ENCODE measurements at regions of chr3 and their contacts with region 1.

Region 1: DNA sequence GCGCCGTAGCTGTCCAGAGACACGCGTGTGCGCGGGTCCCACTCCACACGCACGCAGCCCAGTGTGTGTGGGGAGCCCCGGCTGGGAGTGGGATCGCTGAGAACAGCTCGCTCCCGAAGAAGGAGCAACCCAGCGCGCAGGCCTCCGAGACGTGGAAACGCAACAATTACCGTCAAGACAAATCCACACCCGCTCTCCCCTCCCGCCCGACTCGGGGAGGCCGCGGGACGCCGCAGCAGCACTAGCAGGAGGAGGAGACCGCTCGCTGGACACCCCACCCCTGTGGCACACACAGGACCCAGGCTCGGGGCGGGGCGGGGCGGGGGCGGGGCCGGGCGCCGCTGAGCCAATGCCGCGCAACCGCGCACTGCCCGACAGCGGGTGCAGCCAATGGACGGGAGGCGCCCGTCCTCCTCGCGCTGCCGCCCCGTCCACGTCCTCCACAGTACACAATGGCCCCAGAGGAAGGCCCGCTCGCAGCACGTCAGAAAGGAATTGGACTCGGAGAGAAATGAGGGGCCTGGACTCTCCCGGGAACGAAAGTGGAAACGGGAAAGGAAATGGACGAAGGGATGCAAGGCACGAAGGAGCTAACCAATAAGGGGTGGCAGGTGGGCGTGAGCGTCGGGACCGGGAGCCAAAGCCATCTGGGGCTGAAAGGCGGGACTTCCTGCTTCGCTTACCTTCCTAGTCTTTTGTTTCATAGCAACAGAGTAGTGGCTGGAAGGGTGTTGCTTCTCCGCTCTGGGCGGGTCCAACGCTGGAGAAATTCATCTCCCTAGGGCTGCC is at the start of gene CBLB:
- DNase-seq: peak; percentile 80
- H3K4me3 Mint-ChIP-seq: peak within 1 kb of the TSS; percentile 100
- H3K27ac Mint-ChIP-seq: peak within 1 kb of the TSS; percentile 99
- H3K4me1 Mint-ChIP-seq: peaks cover 48% of the 10 kb centered on the region
- H3K27me3 Mint-ChIP-seq: no peaks in the 10 kb centered on the region
- total RNA-seq, gene CBLB: 213 and 235 TPM in 2 replicates

Region 2: DNA sequence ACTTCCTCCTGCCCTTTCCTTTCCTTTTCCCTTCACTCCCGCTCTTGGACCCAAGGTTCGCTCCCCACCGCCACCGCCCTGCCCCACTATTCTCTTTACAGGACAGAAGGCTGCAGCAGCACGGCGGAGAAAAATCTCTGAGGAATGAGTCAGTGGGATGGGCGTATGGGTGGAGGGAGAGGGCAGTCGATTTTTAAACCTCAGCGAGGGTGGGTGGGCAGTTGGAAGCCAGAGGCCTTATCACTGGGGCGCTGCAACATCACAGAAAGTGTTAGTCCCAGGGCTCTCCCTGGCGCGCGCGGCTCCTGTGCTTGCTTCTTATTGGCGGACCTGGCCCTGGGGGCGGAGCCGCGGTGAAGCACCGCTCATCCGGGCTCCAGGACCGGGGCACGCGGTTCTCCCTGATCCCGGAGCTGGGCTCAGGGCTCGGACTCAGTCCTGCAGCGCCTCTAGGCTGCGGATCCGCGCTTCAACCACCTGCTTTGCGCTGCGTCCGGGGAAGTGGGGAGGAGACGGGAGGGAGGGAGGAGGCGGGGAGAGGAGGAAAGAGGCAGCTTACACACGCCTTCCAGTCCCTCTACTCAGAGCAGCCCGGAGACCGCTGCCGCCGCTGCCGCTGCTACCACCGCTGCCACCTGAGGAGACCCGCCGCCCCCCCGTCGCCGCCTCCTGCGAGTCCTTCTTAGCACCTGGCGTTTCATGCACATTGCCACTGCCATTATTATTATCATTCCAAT is 502.4 kb before region 1 on chr3 and contains the start of gene ALCAM:
- intact Hi-C with region 1: loop called (anchors 1 kb)
- DNase-seq: peak; percentile 80
- H3K4me3 Mint-ChIP-seq: peak within 1 kb of the TSS; percentile 90
- H3K27ac Mint-ChIP-seq: peak within 1 kb of the TSS; percentile 98
- H3K4me1 Mint-ChIP-seq: peaks cover 43% of the 10 kb centered on the region
- H3K27me3 Mint-ChIP-seq: peaks cover 22% of the 10 kb centered on the region
- total RNA-seq, gene ALCAM: 24.9 and 25.2 TPM in 2 replicates

Region 3: GRCh38 chr3:105538483-105538882 is 330.5 kb before region 1 on chr3:
- intact Hi-C with region 1: no loop called
- DNase-seq: no peak
- H3K4me3 Mint-ChIP-seq: no peak overlapping the region
- H3K27ac Mint-ChIP-seq: no peak overlapping the region
- H3K4me1 Mint-ChIP-seq: no peaks in the 10 kb centered on the region
- H3K27me3 Mint-ChIP-seq: no peaks in the 10 kb centered on the region

Region 4: GRCh38 chr3:105806361-105806760 is 62.6 kb before region 1 on chr3:
- intact Hi-C with region 1: loop called (anchors 2 kb)
- DNase-seq: no peak
- H3K4me3 Mint-ChIP-seq: peak overlapping the region; percentile 40
- H3K27ac Mint-ChIP-seq: peak overlapping the region; percentile 84
- H3K4me1 Mint-ChIP-seq: peaks cover 67% of the 10 kb centered on the region
- H3K27me3 Mint-ChIP-seq: no peaks in the 10 kb centered on the region

Region 5: GRCh38 chr3:105984837-105985236 is 115.9 kb after region 1 on chr3:
- intact Hi-C with region 1: loop called (anchors 5 kb)
- DNase-seq: no peak
- H3K4me3 Mint-ChIP-seq: no peak overlapping the region
- H3K27ac Mint-ChIP-seq: no peak overlapping the region
- H3K4me1 Mint-ChIP-seq: peaks cover 29% of the 10 kb centered on the region
- H3K27me3 Mint-ChIP-seq: no peaks in the 10 kb centered on the region

Region 6: DNA sequence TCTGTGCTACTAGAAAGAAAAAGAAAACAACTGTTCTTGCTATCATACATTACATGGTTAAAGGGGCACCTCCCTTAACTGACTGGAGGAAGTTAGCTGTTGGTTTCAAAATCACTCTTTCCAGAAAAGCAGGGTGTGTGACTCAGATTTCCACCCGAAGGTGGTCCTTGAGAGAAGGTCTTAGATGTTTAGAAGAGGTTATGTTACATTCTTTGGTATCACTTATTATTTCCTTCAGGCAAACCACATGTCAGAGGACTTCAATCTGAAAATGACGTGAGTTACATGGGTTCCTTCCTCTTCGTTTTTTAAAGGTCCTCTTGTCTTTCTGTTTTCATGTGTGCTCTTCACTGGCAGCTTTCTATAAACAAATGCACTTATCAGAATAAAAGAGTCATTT is 307.8 kb after region 1 on chr3:
- intact Hi-C with region 1: loop called (anchors 1 kb)
- DNase-seq: peak; percentile 68
- H3K4me3 Mint-ChIP-seq: peak overlapping the region; percentile 75
- H3K27ac Mint-ChIP-seq: peak overlapping the region; percentile 92
- H3K4me1 Mint-ChIP-seq: peaks cover 70% of the 10 kb centered on the region
- H3K27me3 Mint-ChIP-seq: no peaks in the 10 kb centered on the region

Region 7: GRCh38 chr3:106232956-106233355 is 364.0 kb after region 1 on chr3:
- intact Hi-C with region 1: loop called (anchors 5 kb)
- DNase-seq: no peak
- H3K4me3 Mint-ChIP-seq: no peak overlapping the region
- H3K27ac Mint-ChIP-seq: peak overlapping the region; percentile 46
- H3K4me1 Mint-ChIP-seq: peaks cover 46% of the 10 kb centered on the region
- H3K27me3 Mint-ChIP-seq: no peaks in the 10 kb centered on the region

Region 8: DNA sequence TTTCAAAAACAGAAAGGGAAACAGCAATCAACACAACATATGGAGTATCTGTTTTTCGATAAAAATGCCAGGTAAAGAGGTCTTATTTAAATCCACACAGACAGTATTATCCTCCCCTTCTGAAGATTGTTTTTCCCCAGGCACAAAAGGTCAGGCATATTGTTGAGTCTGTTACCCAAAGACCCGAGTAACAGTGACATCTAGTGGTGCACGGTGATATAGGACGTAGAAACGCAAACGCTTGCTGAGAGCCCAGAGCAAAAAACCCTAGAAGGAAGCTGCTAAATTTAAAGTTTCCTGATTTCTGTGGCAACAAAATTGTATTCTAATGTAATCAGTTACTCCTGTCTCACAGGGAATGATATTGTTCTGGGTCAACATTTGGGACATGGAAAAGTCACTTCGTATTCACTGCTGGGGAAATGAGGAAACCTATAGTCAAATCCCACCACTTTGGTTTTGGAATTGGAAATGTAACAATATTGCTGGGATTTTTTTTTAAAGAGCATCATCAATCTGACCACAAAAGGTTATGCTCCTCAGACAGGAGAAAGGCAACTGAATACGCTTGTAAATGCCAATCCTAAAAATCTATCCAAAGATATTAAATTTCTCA is 1195.6 kb after region 1 on chr3:
- intact Hi-C with region 1: loop called (anchors 10 kb)
- DNase-seq: peak; percentile 29
- H3K4me3 Mint-ChIP-seq: no peak overlapping the region
- H3K27ac Mint-ChIP-seq: no peak overlapping the region
- H3K4me1 Mint-ChIP-seq: peaks cover 24% of the 10 kb centered on the region
- H3K27me3 Mint-ChIP-seq: peaks cover 5% of the 10 kb centered on the region

Measured in activated T-helper 1 cell treated with anti-CD3 and anti-CD28 coated beads, Interleukin-12 subunit alpha, Interleukin-12 subunit beta, Interleukin-2, Interleukin-4 antibody, amounts not matched to agents 30 ng/mL and 10 ng/mL and 1 ng/mL, durations not matched to agents 14 hours and 24 hours and 36 hours (primary cell).